WTC11 (cell line): ENCODE measurements at regions of chr4 and their contacts with region 1.

Region 1: GRCh38 chr4:39662683-39663082 is 24.0 kb upstream of the SMIM14 start:
- DNase-seq: no peak
- ATAC-seq: no peak
- H3K4me3 Mint-ChIP-seq: no peak overlapping the region
- H3K27ac Mint-ChIP-seq: no peak overlapping the region
- H3K4me1 Mint-ChIP-seq: no peaks in the 10 kb centered on the region
- H3K27me3 Mint-ChIP-seq: no peaks in the 10 kb centered on the region
- CTCF ChIP-seq: no peak

Region 2: DNA sequence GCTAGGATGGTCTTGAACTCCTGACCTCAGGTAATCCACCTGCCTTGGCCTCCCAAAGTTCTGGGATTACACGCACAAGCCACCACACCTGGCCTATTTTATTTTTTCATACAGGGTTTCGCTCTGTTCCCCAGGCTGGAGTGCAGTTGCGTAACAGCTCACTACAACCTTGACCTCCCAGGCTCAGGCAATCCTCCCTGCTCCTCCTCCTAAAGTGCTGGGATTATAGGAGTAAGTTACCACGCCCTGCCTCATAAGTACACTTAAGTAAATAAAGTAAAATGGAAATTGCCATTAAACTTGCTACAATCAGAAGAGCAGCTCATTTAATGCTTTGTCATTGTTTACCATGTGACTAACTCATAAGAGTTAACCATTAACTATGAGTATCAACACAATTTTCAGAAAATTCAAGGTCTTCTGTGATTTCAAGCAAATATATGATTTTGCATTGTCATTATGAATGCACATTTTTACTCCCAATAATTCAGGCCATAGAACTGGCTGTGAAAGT is 147.7 kb before region 1 on chr4:
- CTCF ChIA-PET with region 1: no interaction called
- POLR2A ChIA-PET with region 1: interaction called, 11 read pairs
- DNase-seq: no peak
- ATAC-seq: no peak
- H3K4me3 Mint-ChIP-seq: no peak overlapping the region
- H3K27ac Mint-ChIP-seq: peak overlapping the region; percentile 84
- H3K4me1 Mint-ChIP-seq: no peaks in the 10 kb centered on the region
- H3K27me3 Mint-ChIP-seq: no peaks in the 10 kb centered on the region
- CTCF ChIP-seq: no peak

Region 3: GRCh38 chr4:39621582-39621981 is 41.1 kb before region 1 on chr4:
- CTCF ChIA-PET with region 1: no interaction called
- POLR2A ChIA-PET with region 1: no interaction called
- DNase-seq: no peak
- ATAC-seq: peak; percentile 63
- H3K4me3 Mint-ChIP-seq: no peak overlapping the region
- H3K27ac Mint-ChIP-seq: no peak overlapping the region
- H3K4me1 Mint-ChIP-seq: peaks cover 34% of the 10 kb centered on the region
- H3K27me3 Mint-ChIP-seq: no peaks in the 10 kb centered on the region
- CTCF ChIP-seq: no peak